Heart left ventricle (tissue), 16 donors: ENCODE measurements at regions of chrX and their contacts with region 1.

Region 1: GRCh38 chrX:13653022-13653693 is at the start of gene TCEANC:
- DNase-seq: peak; percentile 94 to 98 (median 97)
- ATAC-seq: peak; percentile 99 to 100 (median 100)
- H3K4me3 ChIP-seq: peak within 1 kb of the TSS; percentile 29 to 81 (median 64)
- H3K27ac ChIP-seq: peak within 1 kb of the TSS; percentile 73 to 98 (median 94)
- H3K4me1 ChIP-seq: peaks cover 0 to 18% (median 7%) of the 10 kb centered on the region in 12 donors
- H3K27me3 ChIP-seq: peaks cover 0 to 24% (median 0%) of the 10 kb centered on the region in 9 donors
- CTCF ChIP-seq: no peak
- POLR2A ChIP-seq: peak in 1 of 2 donors; percentile 67
- total RNA-seq, gene TCEANC: 1.9 to 6.8 (median 4.2) TPM

Region 2: DNA sequence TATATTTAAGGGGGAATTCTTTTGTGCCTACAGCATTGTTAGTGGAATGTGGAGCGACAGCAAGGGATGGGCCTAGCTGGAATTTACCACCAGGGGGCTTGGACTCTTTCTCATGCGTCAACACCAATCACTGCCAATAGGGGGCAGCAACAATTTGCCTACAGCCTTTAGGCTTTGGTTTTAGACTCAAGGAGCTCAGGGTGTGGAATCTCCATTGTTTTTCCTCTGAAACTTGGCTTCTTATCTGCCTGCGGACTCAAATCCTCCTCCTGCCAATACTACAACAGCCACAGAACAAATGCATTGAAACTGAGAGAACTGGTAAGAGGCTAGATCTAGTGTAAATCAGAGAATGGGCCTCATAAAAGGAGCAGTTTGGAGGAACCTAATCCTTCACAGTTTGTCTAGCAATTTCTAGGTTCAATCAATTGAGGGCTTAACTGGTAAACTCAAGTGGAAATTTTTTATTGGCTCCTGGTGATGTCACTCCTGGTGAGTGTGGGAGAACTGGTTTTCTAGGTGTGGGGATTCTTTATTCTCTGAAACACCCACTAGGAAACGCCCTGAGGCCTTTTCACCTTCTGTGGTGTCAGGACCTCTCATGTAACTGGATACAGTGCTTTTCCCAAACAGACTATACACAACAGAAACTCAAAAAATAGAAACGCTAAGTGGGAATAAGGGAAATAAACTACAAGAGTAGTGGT is 706.2 kb before region 1 on chrX:
- intact Hi-C with region 1: loop called in 3 of 10 experiments (anchors 5 to 10 kb)
- DNase-seq: peak in 4 of 5 donors; percentile 59 to 62 (median 60)
- ATAC-seq: peak in 3 of 4 donors; percentile 75 to 79 (median 78)
- H3K4me3 ChIP-seq: no peak overlapping the region
- H3K27ac ChIP-seq: peak overlapping the region in 8 of 12 donors; percentile 32 to 77 (median 64)
- H3K4me1 ChIP-seq: peaks cover 0 to 55% (median 14%) of the 10 kb centered on the region in 12 donors
- H3K27me3 ChIP-seq: peaks cover 0 to 9% (median 0%) of the 10 kb centered on the region in 9 donors
- CTCF ChIP-seq: peak; percentile 73 to 97 (median 83)
- POLR2A ChIP-seq: no peak

Region 3: GRCh38 chrX:13223868-13224555 is 429.1 kb before region 1 on chrX:
- intact Hi-C with region 1: loop called in 1 of 10 experiments (anchors 5 kb)
- DNase-seq: peak in 2 of 5 donors; percentile 20 to 25
- ATAC-seq: peak; percentile 78 to 90 (median 86)
- H3K4me3 ChIP-seq: no peak overlapping the region
- H3K27ac ChIP-seq: peak overlapping the region in 7 of 12 donors; percentile 2 to 65 (median 42)
- H3K4me1 ChIP-seq: peaks cover 0 to 20% (median 2%) of the 10 kb centered on the region in 12 donors
- H3K27me3 ChIP-seq: peaks cover 0 to 8% (median 0%) of the 10 kb centered on the region in 9 donors
- CTCF ChIP-seq: peak in 2 of 12 donors; percentile 8 to 9
- POLR2A ChIP-seq: no peak

Region 4: DNA sequence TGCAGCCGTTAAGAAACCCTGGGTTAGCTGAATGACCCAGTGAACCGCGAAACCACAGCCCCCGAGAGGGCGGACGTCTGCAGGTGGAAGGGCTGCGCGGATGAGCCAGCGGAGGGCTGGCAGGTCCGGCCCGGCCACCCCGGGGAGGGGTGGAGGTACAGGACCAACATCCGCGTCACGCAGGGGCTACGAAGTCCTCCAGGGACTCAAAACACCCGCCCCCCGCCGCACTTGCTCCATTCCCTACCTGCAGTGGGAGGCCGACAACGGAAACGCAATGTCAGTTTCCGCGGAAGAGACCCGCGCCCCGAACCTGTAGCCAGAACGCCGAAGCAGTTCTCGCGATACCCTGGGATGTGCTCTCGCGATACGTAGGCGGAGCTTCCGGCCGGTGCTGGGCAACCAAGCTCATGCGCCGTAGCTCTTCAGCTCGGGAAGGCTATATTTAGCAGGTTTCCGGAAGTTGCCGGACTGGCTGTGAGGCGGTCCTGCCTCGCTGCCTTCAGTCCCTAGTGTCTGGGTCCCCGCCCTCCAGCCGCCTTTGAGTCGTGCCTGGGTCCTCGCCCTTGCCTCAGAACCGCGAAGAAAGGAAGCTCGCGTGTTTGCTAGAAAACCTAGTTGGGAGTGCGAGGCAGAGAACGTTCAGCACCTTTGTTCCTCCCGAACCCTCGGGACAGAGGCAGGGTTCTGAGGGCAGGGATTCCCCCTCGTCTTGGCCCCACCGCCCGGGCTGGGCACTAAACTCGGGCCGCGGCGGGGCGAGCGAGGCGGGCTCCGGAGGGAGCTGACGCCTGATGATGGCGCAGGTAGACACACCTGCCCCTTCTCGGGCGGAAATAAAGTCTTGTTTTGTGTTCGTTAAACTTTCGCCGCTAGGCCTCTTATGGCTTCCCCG is 81.4 kb after region 1 on chrX and contains the starts of genes OFD1 and TRAPPC2:
- intact Hi-C with region 1: loop called in 2 of 10 experiments (anchors 1 to 10 kb)
- DNase-seq: peak; percentile 89 to 94 (median 91)
- ATAC-seq: peak; percentile 99 to 100 (median 100)
- H3K4me3 ChIP-seq: peak within 1 kb of the TSS; percentile 47 to 91 (median 80)
- H3K27ac ChIP-seq: peak within 1 kb of the TSS in 11 of 12 donors; percentile 74 to 94 (median 87)
- H3K4me1 ChIP-seq: peaks cover 0 to 38% (median 7%) of the 10 kb centered on the region in 12 donors
- H3K27me3 ChIP-seq: peaks cover 0 to 22% (median 0%) of the 10 kb centered on the region in 9 donors
- CTCF ChIP-seq: no peak
- POLR2A ChIP-seq: peak in 1 of 2 donors; percentile 90
- total RNA-seq, gene OFD1: 5.6 to 12.9 (median 8.9) TPM
- total RNA-seq, gene TRAPPC2: 4.4 to 11.1 (median 5.3) TPM